RWPE1 (cell line): ENCODE measurements at regions of chr17 and their contacts with region 1.

Region 1: DNA sequence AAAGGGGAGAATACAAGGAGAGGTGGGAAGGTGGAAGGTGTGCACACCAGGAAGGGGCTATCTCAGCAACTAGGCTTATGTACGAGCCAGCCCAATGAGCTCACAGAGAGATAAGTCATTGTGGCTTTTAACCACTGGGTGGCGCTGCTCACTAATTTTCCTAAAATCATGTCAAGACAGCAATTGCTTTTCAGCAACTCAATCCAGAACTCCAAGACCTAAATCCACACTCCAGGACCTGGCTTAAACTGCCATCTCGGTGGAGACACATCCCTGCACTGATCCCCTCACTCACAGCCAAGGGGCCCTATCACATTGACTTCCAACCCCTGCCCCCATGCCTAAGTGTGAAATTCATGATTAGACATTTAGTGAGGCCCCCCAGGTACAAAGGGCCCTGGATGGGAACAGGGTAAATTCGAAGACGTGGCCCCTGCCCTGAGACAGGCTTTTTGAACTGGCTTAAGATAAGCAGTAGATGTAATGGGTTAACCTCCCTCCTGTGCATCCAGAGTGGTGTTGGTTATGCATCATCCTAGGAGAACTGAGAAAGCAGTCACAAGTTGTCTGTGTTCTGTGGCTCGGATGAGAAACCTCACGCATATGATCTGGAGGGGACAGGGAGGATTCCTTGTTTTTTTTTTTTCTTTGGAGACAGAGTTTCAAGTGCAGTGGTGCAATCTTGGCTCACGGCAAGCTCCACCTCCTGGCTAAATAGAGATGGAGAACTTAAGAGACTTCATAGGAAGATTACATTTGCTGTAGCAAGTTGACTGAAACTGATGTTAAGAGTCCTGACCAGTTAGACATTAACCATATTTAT is 11.5 kb downstream of the CCL16 start:
- DNase-seq: peak; percentile 66
- H3K27ac ChIP-seq: no peak overlapping the region
- CTCF ChIP-seq: peak; percentile 82

Region 2: DNA sequence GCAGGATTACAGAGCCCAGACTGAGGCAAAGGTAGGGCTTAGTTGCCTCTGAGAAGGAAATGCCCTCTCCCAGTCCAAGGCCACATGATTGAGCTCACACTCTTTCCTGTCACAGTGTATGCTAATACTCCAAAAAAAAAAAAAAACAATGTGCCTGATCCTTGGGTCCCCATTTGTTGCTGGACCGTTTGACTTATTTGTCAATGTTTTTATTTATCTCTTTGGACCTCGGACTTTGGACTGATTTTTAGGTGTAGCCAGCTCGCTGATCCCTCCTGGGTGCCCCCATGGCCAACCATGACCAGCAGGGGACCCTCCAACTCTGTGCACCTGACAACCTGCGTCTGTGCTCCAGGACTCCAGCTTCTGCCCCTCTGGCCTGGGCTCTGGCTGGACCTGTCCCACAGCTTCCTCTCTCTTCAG is 12.2 kb after region 1 on chr17:
- CTCF ChIA-PET with region 1: no interaction called
- POLR2A ChIA-PET with region 1: no interaction called
- DNase-seq: no peak
- H3K27ac ChIP-seq: no peak overlapping the region
- CTCF ChIP-seq: no peak

Region 3: GRCh38 chr17:36148559-36149295 is 179.0 kb after region 1 on chr17:
- CTCF ChIA-PET with region 1: interaction called, 72 read pairs
- POLR2A ChIA-PET with region 1: no interaction called
- DNase-seq: peak; percentile 91
- H3K27ac ChIP-seq: no peak overlapping the region
- CTCF ChIP-seq: peak; percentile 100